ENCODE measurements at regions of chr7 and their contacts with region 1.

Region 1: GRCh38 chr7:150567169-150567568 is at the start of gene GIMAP4:
- DNase-seq: peak in 2 of 10 donors; percentile 36 to 47
- ATAC-seq: peak; percentile 37 to 49
- H3K4me3 Mint-ChIP-seq: peak within 1 kb of the TSS; percentile 83 to 100 (median 99)
- H3K27ac Mint-ChIP-seq: peak within 1 kb of the TSS; percentile 95 to 99 (median 97)
- H3K4me1 Mint-ChIP-seq: peaks cover 35 to 87% (median 79%) of the 10 kb centered on the region in 4 donors
- H3K27me3 Mint-ChIP-seq: no peaks in the 10 kb centered on the region
- polyA plus RNA-seq, gene GIMAP4: 233 to 526 (median 341) TPM

Region 2: DNA sequence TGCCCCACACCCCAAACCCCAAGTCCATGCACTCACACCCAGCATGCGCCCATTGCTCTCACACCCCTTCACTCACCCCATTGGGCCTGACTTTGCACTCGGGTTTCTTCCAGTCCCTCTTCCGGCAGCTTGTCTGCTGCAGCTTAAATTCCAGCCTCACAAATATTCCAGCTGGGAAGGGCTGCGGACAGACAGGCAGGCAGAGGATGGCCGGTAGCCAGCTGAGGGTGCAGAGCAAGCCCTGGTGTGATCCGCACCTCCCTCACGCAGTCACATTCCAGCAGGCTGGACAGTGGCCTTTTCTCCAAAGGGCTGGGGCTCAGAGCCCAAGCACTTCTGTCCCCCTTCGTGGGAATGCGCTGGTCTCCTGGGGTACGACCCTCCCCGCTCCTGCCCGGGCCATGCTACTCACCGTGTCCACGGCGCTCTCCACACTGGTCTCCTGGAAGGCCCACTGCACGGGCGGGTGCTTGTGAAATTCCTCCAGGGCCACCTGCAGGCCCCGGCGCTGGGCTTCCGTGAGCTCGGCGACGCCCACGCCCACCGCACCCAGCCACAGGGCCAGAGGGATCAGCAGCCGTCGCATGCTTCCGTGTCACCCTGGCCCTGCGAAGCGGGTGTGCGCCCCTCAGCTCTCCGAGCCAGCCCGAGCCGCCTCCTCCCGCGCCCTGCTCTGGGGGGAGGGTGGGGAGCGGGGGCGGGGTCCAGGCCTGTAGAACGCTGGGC is 227.0 kb before region 1 on chr7:
- POLR2A ChIA-PET with region 1: no interaction called
- DNase-seq: peak in 3 of 10 donors; percentile 23 to 48 (median 26)
- ATAC-seq: peak; percentile 71 to 88
- H3K4me3 Mint-ChIP-seq: peak overlapping the region in 4 of 10 donors; percentile 46 to 63 (median 50)
- H3K27ac Mint-ChIP-seq: peak overlapping the region in 1 of 10 donors; percentile 5
- H3K4me1 Mint-ChIP-seq: peaks cover 7 to 33% (median 14%) of the 10 kb centered on the region in 4 donors
- H3K27me3 Mint-ChIP-seq: peaks cover 4 to 41% (median 25%) of the 10 kb centered on the region in 5 donors

Region 3: DNA sequence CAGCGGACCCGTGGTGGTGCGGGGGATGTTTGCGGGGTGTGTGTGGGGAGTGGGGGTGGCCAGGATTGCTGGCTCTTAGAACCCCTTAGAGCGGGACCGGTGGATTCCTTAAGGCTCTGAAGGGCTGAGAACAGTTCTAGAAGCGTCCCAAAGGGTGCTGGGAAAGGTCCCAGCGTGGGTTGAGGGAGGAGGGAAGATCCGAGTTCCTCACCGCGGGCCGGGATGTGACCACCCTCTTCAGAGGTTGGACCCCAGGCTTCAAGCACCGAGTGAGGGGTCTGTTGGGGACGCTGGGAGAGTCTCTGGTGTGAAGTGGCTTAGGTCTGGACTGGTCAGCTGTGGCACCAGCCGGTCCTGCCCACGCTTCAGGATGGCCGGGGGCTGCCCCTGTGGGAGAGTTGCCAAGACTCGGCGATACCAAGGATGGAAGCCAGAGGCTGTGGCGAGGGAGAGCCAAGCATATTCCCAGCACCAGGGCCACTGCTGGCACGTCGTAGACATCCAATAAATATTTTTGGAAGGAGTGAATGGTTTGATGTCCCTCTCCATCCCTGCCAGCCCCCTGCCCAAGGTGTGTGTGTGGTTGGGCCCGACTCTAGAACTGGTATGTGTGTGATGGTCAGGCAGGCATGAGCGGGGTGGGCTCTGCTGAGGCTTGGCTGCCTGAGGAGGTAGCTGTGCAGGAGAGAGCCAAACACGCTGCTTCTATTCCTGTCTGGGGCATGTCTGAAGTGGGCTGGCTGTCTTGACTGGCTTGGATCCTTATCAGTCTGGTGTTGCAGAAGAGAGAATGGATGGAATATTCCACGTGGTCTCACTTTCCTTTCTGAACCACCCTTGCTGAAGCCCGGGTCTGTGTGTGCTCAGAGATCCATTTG is 168.8 kb before region 1 on chr7:
- POLR2A ChIA-PET with region 1: no interaction called
- DNase-seq: no peak
- ATAC-seq: no peak
- H3K4me3 Mint-ChIP-seq: no peak overlapping the region
- H3K27ac Mint-ChIP-seq: no peak overlapping the region
- H3K4me1 Mint-ChIP-seq: peaks cover 0 to 16% (median 2%) of the 10 kb centered on the region in 4 donors
- H3K27me3 Mint-ChIP-seq: no peaks in the 10 kb centered on the region

Region 4: GRCh38 chr7:150502519-150502918 is 64.7 kb before region 1 on chr7:
- POLR2A ChIA-PET with region 1: interaction called, 10 read pairs
- DNase-seq: peak in 5 of 10 donors; percentile 13 to 81 (median 58)
- ATAC-seq: peak; percentile 84 to 98
- H3K4me3 Mint-ChIP-seq: peak overlapping the region; percentile 13 to 83 (median 70)
- H3K27ac Mint-ChIP-seq: peak overlapping the region; percentile 83 to 97 (median 92)
- H3K4me1 Mint-ChIP-seq: peaks cover 49 to 87% (median 85%) of the 10 kb centered on the region in 4 donors
- H3K27me3 Mint-ChIP-seq: no peaks in the 10 kb centered on the region

Region 5: GRCh38 chr7:150538259-150538658 is 28.9 kb before region 1 on chr7:
- POLR2A ChIA-PET with region 1: interaction called, 19 read pairs
- DNase-seq: no peak
- ATAC-seq: no peak
- H3K4me3 Mint-ChIP-seq: no peak overlapping the region
- H3K27ac Mint-ChIP-seq: no peak overlapping the region
- H3K4me1 Mint-ChIP-seq: peaks cover 4 to 32% (median 15%) of the 10 kb centered on the region in 4 donors
- H3K27me3 Mint-ChIP-seq: no peaks in the 10 kb centered on the region

Region 6: GRCh38 chr7:150648353-150649079 is 81.3 kb after region 1 on chr7:
- POLR2A ChIA-PET with region 1: interaction called, 35 read pairs
- DNase-seq: peak in 2 of 10 donors; percentile 49 to 53
- ATAC-seq: peak; percentile 85 to 87
- H3K4me3 Mint-ChIP-seq: peak overlapping the region in 9 of 10 donors; percentile 43 to 75 (median 57)
- H3K27ac Mint-ChIP-seq: peak overlapping the region; percentile 82 to 94 (median 88)
- H3K4me1 Mint-ChIP-seq: peaks cover 16 to 77% (median 55%) of the 10 kb centered on the region in 4 donors
- H3K27me3 Mint-ChIP-seq: no peaks in the 10 kb centered on the region

Region 7: DNA sequence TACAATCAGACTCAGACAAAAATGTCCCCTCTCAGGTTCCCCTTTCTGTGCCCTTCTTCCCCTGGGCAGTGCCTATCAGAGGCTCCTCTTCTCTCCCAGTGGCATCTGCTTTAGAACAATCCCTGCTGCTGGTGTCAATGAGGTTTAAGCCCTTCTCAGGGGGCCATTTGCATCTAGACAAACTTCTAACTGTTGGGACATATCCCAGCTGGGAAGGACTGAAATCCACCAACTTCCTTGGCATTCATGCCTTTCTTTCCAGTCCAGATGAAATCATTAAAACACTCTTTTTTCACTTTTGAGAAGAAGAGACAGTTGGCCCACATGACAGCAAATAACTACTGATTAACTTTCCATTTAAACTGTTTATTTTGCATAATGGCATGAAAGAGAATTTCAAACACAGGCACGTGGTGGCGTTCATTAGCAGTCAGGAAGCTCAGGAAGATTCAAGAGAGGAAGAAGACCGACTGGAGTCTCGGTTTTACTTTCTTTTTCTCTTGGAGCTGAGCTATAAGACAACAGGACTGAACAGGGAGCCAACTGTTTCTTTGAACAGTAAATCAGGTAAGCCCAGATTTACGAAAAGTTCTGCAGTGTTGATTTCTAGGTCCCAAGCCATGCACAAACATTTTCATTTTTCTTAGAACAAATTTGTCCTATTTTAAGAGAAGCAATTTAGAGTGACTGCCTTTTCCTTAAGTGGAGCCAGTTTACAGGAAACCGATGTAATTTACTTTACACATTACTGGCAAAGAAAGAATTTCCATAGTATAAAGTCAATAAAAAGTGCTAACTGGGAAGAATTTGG is 118.3 kb after region 1 on chr7 and contains the start of gene GIMAP2:
- POLR2A ChIA-PET with region 1: interaction called, 178 read pairs
- DNase-seq: peak in 5 of 10 donors; percentile 7 to 68 (median 58)
- ATAC-seq: peak; percentile 71 to 89
- H3K4me3 Mint-ChIP-seq: peak within 1 kb of the TSS; percentile 94 to 100 (median 97)
- H3K27ac Mint-ChIP-seq: peak within 1 kb of the TSS; percentile 95 to 100 (median 98)
- H3K4me1 Mint-ChIP-seq: peaks cover 46 to 93% (median 80%) of the 10 kb centered on the region in 4 donors
- H3K27me3 Mint-ChIP-seq: no peaks in the 10 kb centered on the region
- polyA plus RNA-seq, gene GIMAP2: 89.3 to 102 (median 93.8) TPM

Region 8: GRCh38 chr7:150753826-150754603 is 186.8 kb after region 1 on chr7:
- POLR2A ChIA-PET with region 1: interaction called, 107 read pairs
- DNase-seq: peak in 1 of 10 donors; percentile 60
- ATAC-seq: peak in 1 of 2 donors; percentile 10
- H3K4me3 Mint-ChIP-seq: peak overlapping the region in 9 of 10 donors; percentile 36 to 78 (median 63)
- H3K27ac Mint-ChIP-seq: peak overlapping the region; percentile 66 to 97 (median 94)
- H3K4me1 Mint-ChIP-seq: peaks cover 35 to 77% (median 71%) of the 10 kb centered on the region in 4 donors
- H3K27me3 Mint-ChIP-seq: peaks cover 0 to 2% (median 0%) of the 10 kb centered on the region in 5 donors

Measured in naive thymus-derived CD8-positive, alpha-beta T cell (primary cell).